ENCODE measurements at regions of chr2 and their contacts with region 1.

Region 1: GRCh38 chr2:227125506-227125905 is 38.5 kb downstream of the COL4A4 start:
- DNase-seq: no peak
- ATAC-seq: peak; percentile 80
- H3K4me3 ChIP-seq: no peak overlapping the region
- H3K27ac ChIP-seq: no peak overlapping the region
- H3K4me1 ChIP-seq: no peaks in the 10 kb centered on the region
- H3K27me3 ChIP-seq: no peaks in the 10 kb centered on the region
- CTCF ChIP-seq: peak; percentile 31 to 61 (median 48); a peak in 5 of 6 replicates
- POLR2A ChIP-seq: no peak
- RAD21 ChIP-seq: peak; percentile 60

Region 2: DNA sequence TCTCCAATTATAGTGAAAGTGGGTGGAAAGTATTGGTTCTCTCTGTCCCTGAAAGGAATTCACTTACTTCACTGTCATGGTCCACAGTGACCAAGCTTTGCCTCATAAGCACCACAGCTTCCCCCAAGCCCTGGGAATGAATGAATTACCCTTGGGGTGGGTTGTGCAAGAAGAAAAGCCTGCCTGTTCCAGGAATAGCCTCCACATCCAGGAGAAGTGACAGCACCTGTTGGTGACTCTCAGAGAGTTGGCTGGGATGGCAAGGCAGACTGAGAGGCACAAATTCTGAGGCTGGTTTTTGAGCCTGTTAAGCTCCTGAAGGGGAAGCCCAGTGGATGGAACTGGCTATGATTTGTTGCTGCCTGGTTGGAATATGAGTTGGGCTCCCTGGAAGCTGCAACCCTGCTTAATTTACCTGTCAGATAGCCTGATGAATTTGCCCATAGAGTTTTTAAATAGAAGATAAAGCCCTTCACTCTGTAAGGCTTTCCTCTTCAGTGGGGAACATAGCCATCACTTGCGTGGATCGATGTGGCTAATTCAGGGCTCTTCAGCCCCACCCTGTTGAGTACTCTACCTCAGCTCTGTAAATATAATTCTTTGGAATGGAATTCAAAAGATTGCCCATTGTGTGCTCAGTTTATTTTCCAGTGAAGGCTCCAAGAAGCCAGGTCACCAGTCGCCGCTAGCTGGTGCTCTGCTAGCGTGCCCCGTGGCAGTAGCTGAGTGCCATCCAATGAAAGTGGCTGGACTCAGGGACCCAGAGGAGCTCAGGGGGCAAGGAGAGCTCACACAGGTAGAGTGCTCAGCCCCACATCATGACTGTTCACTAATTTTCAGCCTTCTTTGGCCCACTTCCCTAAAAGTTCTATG is 805.2 kb before region 1 on chr2:
- CTCF ChIA-PET with region 1: no interaction called
- POLR2A ChIA-PET with region 1: no interaction called
- RAD21 ChIA-PET with region 1: no interaction called
- intact Hi-C with region 1: no loop called
- DNase-seq: no peak
- ATAC-seq: no peak
- H3K4me3 ChIP-seq: no peak overlapping the region
- H3K27ac ChIP-seq: no peak overlapping the region
- H3K4me1 ChIP-seq: peaks cover 0 to 15% of the 10 kb centered on the region in 2 experiments; a peak in 1 of 4 replicates
- H3K27me3 ChIP-seq: no peaks in the 10 kb centered on the region
- CTCF ChIP-seq: no peak
- POLR2A ChIP-seq: no peak
- RAD21 ChIP-seq: no peak

Region 3: GRCh38 chr2:227406177-227407031 is 280.9 kb after region 1 on chr2:
- CTCF ChIA-PET with region 1: no interaction called
- POLR2A ChIA-PET with region 1: no interaction called
- RAD21 ChIA-PET with region 1: no interaction called
- intact Hi-C with region 1: loop called (anchors 10 kb)
- DNase-seq: peak; percentile 94
- ATAC-seq: peak; percentile 92
- H3K4me3 ChIP-seq: 0 out of 4 replicates have a peak overlapping the region, but pooled peaks of 1 of the 2 experiments have one; percentile 4
- H3K27ac ChIP-seq: peak overlapping the region; percentile 11; the same call in 1 of the 2 replicates
- H3K4me1 ChIP-seq: peaks cover 6 to 27% of the 10 kb centered on the region in 2 experiments
- H3K27me3 ChIP-seq: no peaks in the 10 kb centered on the region
- CTCF ChIP-seq: peak; percentile 71 to 92 (median 84)
- POLR2A ChIP-seq: no peak
- RAD21 ChIP-seq: peak; percentile 99